ENCODE measurements at regions of chr1 and their contacts with region 1.

Region 1: GRCh38 chr1:162854245-162854882 is 6.6 kb downstream of the CCDC190 start:
- DNase-seq: no peak
- H3K4me3 ChIP-seq: no peak overlapping the region
- H3K27ac ChIP-seq: no peak overlapping the region
- H3K4me1 ChIP-seq: no peaks in the 10 kb centered on the region
- H3K27me3 ChIP-seq: no peaks in the 10 kb centered on the region
- CTCF ChIP-seq: peak in 2 of 3 experiments; percentile 52 to 69; a peak in 3 of 4 replicates
- EP300 ChIP-seq: no peak
- POLR2A ChIP-seq: no peak
- RAD21 ChIP-seq: peak; percentile 67 to 68

Region 2: DNA sequence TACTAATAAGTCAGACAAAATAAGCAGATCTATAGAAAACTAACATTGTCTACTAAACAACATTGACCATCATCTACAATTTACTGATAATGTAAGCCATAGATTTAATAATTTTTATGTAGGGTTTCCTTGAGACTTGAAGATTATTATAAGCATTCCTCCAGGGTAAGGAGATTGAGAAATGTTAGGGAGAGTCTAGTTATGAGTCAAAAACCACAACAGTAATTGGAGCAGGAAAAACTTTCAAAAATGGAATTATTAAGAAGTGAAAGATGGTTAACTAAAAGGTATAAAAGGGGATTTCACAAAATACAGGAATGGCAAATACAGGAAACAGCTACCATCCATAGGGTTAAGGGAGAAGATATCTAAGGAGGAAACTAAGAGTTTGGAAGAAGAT is 369.1 kb before region 1 on chr1:
- CTCF ChIA-PET with region 1: no interaction called
- POLR2A ChIA-PET with region 1: no interaction called
- DNase-seq: no peak
- H3K4me3 ChIP-seq: no peak overlapping the region
- H3K27ac ChIP-seq: no peak overlapping the region
- H3K4me1 ChIP-seq: no peaks in the 10 kb centered on the region
- H3K27me3 ChIP-seq: no peaks in the 10 kb centered on the region
- CTCF ChIP-seq: no peak
- EP300 ChIP-seq: no peak
- POLR2A ChIP-seq: no peak
- RAD21 ChIP-seq: no peak

Region 3: GRCh38 chr1:163174524-163175437 is 320.4 kb after region 1 on chr1:
- CTCF ChIA-PET with region 1: interaction called, 11 read pairs
- POLR2A ChIA-PET with region 1: no interaction called
- DNase-seq: peak; percentile 19 to 77
- H3K4me3 ChIP-seq: no peak overlapping the region
- H3K27ac ChIP-seq: no peak overlapping the region
- H3K4me1 ChIP-seq: no peaks in the 10 kb centered on the region; a peak in 1 of 7 replicates
- H3K27me3 ChIP-seq: no peaks in the 10 kb centered on the region
- CTCF ChIP-seq: peak; percentile 64 to 78 (median 72)
- EP300 ChIP-seq: no peak
- POLR2A ChIP-seq: no peak
- RAD21 ChIP-seq: peak; percentile 74 to 76